ENCODE measurements at regions of chr14 and their contacts with region 1.

Region 1: DNA sequence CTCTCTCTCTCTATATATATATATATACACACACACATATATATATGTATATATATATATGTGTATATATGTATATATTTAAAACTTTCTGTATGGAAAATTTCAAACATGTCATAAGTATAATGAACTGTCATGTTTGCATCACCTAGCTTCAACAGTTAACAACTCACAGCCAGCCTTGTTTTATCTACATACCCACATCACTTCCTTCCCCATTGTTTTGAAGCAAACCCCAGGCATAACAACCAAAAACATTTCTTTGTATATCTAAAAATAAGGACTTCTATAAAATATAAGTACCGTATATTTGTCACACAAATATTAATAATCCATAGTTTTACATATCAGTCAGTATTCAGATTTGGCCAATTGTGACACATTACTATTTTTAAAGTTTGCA is 57.4 kb downstream of the PAPOLA start:
- DNase-seq: no peak
- ATAC-seq: no peak
- H3K4me3 ChIP-seq: no peak overlapping the region
- H3K27ac ChIP-seq: no peak overlapping the region
- H3K4me1 ChIP-seq: no peaks in the 10 kb centered on the region
- H3K27me3 ChIP-seq: no peaks in the 10 kb centered on the region
- CTCF ChIP-seq: no peak
- EP300 ChIP-seq: no peak
- POLR2A ChIP-seq: no peak
- RAD21 ChIP-seq: no peak

Region 2: GRCh38 chr14:97172644-97173043 is 613.1 kb after region 1 on chr14:
- CTCF ChIA-PET with region 1: no interaction called
- POLR2A ChIA-PET with region 1: interaction called, 3 read pairs
- in situ Hi-C with region 1: no loop called
- intact Hi-C with region 1: loop called (anchors 1 kb)
- DNase-seq: no peak
- ATAC-seq: no peak
- H3K4me3 ChIP-seq: no peak overlapping the region
- H3K27ac ChIP-seq: no peak overlapping the region
- H3K4me1 ChIP-seq: no peaks in the 10 kb centered on the region
- H3K27me3 ChIP-seq: no peaks in the 10 kb centered on the region
- CTCF ChIP-seq: no peak
- EP300 ChIP-seq: no peak
- POLR2A ChIP-seq: no peak
- RAD21 ChIP-seq: no peak

Region 3: GRCh38 chr14:97747316-97747715 is 1187.7 kb after region 1 on chr14:
- CTCF ChIA-PET with region 1: no interaction called
- POLR2A ChIA-PET with region 1: no interaction called
- in situ Hi-C with region 1: no loop called
- intact Hi-C with region 1: no loop called
- DNase-seq: no peak
- ATAC-seq: no peak
- H3K4me3 ChIP-seq: no peak overlapping the region
- H3K27ac ChIP-seq: no peak overlapping the region
- H3K4me1 ChIP-seq: no peaks in the 10 kb centered on the region
- H3K27me3 ChIP-seq: no peaks in the 10 kb centered on the region
- CTCF ChIP-seq: no peak
- EP300 ChIP-seq: no peak
- POLR2A ChIP-seq: no peak
- RAD21 ChIP-seq: no peak